Dorsolateral prefrontal cortex (tissue), 120 donors: ENCODE measurements at regions of chr10 and their contacts with region 1.

Region 1: GRCh38 chr10:4849555-4850242 is 23.7 kb downstream of the AKR1E2 start:
- DNase-seq: peak; percentile 75 to 96 (median 88)
- H3K4me3 ChIP-seq: peak overlapping the region in 12 of 59 donors; percentile 5 to 44 (median 24)
- H3K27ac ChIP-seq: peak overlapping the region in 11 of 59 donors; percentile 8 to 49 (median 28)
- H3K27me3 ChIP-seq: no peaks in the 10 kb centered on the region
- CTCF ChIP-seq: peak; percentile 95 to 100 (median 100)

Region 2: DNA sequence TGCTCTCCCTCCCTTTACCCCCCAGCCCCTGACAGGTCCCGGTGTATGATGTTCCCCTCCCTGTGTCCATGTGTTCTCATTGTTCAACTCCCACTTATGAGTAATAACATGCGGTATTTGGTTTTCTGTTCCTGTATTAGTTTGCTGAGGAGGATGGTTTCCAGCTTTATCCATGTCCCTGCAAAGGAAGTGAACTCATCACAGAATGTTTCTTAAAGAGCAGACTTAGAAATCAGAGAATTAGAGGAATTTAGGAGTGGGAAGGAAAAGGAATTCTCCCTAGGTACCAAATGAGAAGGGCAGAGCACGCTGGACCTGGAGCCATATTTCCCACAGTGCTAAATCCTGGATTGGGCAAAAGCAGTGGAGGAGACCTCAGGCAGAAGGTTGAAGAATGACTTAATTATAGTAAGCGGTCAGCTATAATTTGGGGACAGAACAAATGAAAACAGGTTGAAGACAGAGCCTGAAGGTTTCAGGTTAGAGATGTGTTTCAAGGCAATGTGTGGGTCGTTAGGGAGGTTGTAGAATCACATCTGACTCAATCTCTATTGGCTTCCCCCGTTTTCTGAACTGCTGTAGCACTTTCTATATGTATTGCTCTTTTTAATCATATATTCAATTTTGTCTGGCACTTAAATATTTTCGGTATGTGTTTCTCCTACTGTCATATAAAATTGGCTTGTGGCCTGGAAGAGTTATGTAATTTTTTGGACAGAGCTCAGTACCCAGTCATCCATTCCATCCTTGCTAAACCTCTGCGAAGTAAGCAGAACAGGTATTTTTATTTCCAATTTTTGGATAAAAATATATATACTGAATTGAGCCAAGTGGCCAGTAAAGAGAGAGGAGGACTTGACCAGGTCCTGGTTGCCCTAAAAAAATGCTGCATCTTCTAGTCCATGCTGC is 854.1 kb before region 1 on chr10:
- intact Hi-C with region 1: no loop called
- DNase-seq: no peak
- H3K4me3 ChIP-seq: no peak overlapping the region
- H3K27ac ChIP-seq: no peak overlapping the region
- H3K27me3 ChIP-seq: peaks cover 0 to 5% (median 0%) of the 10 kb centered on the region in 45 donors
- CTCF ChIP-seq: no peak

Region 3: DNA sequence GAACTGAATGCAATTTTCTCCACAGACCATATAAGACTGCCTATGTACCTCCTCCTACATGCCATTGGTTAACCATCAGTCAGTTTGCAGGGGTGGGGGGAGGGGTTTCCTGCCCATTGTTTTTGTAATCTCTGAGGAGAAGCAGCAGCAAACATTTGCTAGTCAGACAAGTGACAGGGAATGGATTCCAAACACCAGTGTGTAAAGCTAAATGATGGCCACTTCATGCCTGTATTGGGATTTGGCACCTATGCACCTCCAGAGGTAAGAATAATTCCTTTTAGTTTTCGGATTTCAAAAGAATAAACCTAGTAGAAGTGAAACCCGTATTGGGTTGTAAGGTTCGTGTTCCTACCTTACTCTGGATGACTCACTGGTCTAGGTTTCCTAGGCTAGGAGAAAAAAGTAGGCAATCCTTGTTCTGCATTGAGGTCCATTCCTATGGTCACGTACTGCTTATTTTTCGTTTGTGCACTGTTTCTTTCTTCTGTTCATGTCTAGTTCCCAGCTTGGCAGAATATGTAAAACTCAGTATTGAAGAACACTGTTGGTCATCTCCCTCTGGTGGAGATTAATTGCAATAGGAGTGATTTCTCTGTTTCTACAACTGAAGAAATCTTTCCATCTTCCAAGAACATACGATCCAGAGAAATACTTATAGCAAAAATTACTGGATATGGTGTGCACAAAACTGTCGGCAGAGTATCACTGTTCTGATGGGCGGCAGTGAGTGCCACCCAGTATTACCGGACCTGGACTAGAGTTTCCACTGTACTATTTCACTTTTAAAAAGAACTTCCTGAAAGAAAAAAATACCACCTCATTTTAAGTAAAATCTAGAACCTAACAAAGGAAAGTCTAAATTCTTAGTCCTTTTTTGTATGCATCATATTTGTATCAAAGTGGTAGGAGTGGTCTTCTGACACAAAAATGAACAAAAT is 244.8 kb after region 1 on chr10 and contains the start of gene AKR1C3:
- intact Hi-C with region 1: loop called in 1 of 2 experiments (anchors 10 kb)
- DNase-seq: no peak
- H3K4me3 ChIP-seq: peak within 1 kb of the TSS; percentile 19 to 66 (median 50)
- H3K27ac ChIP-seq: peak within 1 kb of the TSS in 17 of 59 donors; percentile 8 to 61 (median 33)
- H3K27me3 ChIP-seq: peaks cover 0 to 11% (median 0%) of the 10 kb centered on the region in 45 donors
- CTCF ChIP-seq: peak; percentile 33 to 76 (median 59)
- total RNA-seq, gene AKR1C3: 3.9 to 46.5 (median 13.7) TPM

Region 4: DNA sequence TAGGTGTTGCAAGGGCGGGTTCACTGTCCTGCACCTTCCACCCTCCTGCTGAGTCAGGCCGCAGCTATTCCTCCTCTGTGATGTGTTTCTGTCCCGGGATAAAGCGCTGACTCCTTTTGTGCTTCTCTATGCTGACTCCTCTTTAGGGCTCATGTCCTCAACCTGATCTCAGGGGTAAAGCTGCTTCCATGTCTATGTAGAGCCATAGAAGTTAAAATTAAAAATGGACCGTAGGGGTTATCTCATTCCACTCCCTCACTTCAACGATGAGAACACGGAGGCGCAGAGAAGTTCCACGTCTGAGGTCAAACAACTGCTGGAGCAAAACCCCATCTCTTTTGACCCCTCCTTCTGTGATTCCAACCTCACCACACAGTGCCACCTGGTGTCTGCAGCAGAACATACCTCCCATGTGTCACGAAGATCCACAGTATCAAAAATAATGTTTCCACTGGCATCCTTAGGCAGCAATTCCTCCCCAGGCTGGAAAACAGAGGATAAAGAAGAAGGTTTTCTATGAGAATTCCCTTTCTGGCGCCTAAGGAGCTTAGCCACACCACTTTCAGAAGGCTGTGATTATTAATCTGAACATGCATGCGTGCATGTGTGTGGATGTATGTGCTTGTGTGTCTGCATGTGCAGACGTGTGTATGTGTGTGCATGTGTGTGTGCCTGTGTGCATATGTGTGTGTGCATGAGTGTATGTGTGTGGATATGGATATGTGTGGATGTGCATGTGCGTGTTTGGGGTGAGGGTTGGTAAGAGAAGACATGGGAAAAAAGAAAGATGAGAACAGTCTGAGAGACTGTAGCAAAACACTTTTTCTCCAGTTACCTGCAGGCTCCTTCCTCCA is 433.8 kb after region 1 on chr10:
- intact Hi-C with region 1: loop called in 1 of 2 experiments (anchors 2 kb)
- DNase-seq: peak in 1 of 10 donors; percentile 13
- H3K4me3 ChIP-seq: no peak overlapping the region
- H3K27ac ChIP-seq: no peak overlapping the region
- H3K27me3 ChIP-seq: peaks cover 0 to 21% (median 0%) of the 10 kb centered on the region in 45 donors
- CTCF ChIP-seq: peak in 50 of 56 donors; percentile 27 to 72 (median 49)

Region 5: GRCh38 chr10:5385224-5385623 is 535.5 kb after region 1 on chr10:
- intact Hi-C with region 1: loop called (anchors 10 kb)
- DNase-seq: no peak
- H3K4me3 ChIP-seq: no peak overlapping the region
- H3K27ac ChIP-seq: no peak overlapping the region
- H3K27me3 ChIP-seq: peaks cover 0 to 15% (median 0%) of the 10 kb centered on the region in 45 donors
- CTCF ChIP-seq: no peak

Region 6: GRCh38 chr10:5434017-5434753 is 584.5 kb after region 1 on chr10:
- intact Hi-C with region 1: loop called (anchors 5 to 10 kb)
- DNase-seq: no peak
- H3K4me3 ChIP-seq: no peak overlapping the region
- H3K27ac ChIP-seq: peak overlapping the region in 3 of 59 donors; percentile 11 to 41 (median 11)
- H3K27me3 ChIP-seq: no peaks in the 10 kb centered on the region
- CTCF ChIP-seq: peak; percentile 50 to 93 (median 76)

Region 7: DNA sequence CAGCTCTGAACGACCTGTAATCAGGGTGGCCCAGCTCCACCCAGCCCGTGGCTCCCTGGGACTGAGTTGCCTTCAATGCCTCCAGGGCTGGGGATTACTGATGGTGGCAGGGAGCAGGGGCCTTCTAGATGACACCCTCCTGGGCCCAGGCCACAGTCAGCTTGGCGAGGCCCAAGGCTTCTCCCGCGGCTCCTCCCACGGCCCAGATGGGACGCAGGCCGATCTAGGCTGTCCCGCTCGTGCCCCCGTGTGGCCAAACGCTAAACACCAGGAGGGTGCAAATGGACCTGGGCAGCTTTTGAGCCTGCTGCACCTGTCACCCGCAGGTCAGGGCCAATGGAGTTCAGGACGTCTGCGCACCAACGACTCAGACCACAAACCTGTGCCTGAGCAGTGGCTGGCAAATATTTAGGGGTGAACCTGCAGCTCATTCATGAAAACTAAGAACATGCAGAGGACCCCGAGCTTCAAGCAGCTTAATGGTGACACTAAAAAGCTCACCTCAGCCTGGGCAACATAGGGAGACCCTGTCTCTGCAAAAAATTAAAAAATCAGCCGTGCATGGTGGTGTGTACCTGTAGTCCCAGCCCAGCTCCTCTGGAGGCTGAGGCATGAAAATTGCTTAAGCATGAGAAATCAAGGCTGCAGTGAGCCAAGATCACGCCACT is 773.5 kb after region 1 on chr10:
- intact Hi-C with region 1: loop called in 1 of 2 experiments (anchors 5 kb)
- DNase-seq: peak; percentile 64 to 84 (median 80)
- H3K4me3 ChIP-seq: peak overlapping the region in 6 of 59 donors; percentile 9 to 45 (median 12)
- H3K27ac ChIP-seq: peak overlapping the region in 4 of 59 donors; percentile 15 to 76 (median 70)
- H3K27me3 ChIP-seq: no peaks in the 10 kb centered on the region
- CTCF ChIP-seq: peak; percentile 44 to 94 (median 87)

Region 8: GRCh38 chr10:5629303-5630111 is 779.8 kb after region 1 on chr10:
- intact Hi-C with region 1: loop called (anchors 5 to 10 kb)
- DNase-seq: peak; percentile 37 to 82 (median 72)
- H3K4me3 ChIP-seq: no peak overlapping the region
- H3K27ac ChIP-seq: no peak overlapping the region
- H3K27me3 ChIP-seq: no peaks in the 10 kb centered on the region
- CTCF ChIP-seq: peak; percentile 56 to 91 (median 80)